ENCODE measurements at regions of chr3 and their contacts with region 1.

Region 1: DNA sequence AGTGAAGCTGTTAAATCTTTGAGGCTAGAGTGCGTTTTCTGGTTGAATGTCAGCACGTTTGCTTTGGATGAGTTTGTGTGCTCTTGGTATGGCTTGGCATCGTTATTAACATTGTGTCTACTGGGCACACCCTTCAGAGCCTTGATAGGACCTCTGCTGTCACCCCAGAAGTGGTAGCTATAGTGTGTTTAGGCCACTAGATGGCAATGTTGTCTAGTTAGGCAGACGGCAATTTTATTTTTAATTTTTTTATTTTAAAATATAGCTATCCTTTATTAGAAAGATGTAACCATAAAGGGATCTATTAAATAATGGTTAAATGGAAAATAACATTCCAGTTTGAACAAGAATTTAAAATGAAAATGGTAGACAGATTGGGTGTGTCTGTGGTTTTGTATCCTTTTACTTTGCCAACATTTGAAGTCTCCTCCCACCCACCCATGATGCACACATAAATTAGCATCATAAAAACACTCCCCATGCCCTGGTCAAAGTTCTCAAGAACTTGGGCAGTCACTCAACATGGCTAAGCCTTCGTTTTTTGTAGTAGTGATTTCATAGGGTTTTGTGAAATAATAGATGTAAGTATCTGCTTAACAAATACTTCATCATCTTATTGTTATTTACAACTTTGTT is 200.7 kb downstream of the KCNH8 start:
- DNase-seq: peak in 1 of 3 donors; percentile 26
- ATAC-seq: peak; percentile 84
- H3K4me3 ChIP-seq: no peak overlapping the region
- H3K4me1 ChIP-seq: no peaks in the 10 kb centered on the region
- CTCF ChIP-seq: peak; percentile 34

Region 2: DNA sequence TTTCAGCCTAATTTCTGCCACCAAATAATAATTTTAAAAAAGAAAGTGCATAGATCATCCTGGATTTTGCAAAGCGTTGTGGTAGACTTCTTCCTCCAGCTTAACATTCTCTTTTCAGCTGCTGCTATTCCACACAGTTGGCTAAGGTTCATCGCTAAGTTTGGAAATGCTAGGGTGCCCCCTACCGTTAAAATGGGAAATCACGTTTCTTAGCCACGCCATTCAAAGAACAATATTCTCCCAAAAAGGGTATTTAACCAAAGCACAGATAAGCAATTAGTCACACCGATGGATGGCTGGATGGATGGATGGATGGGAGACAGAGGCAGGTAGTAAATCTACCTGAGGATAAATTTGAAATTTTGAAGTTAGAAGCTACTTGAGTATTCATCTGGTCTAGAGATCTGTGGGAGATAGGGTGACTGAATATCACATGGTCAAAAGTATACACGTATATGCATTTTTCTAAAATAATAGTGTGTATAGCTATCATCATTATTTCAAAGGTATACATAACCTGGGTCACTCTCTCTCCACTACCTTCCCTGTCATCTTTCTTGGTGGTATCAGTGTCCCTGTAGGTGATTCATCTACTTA is 517.8 kb after region 1 on chr3:
- intact Hi-C with region 1: loop called in 1 of 2 experiments (anchors 2 kb)
- DNase-seq: peak in 1 of 3 donors; percentile 73
- ATAC-seq: peak; percentile 83
- H3K4me3 ChIP-seq: no peak overlapping the region
- H3K4me1 ChIP-seq: no peaks in the 10 kb centered on the region
- CTCF ChIP-seq: no peak

Measured in mucosa of descending colon (tissue), 3 donors.